OCI-LY7 (cell line): ENCODE measurements at regions of chr7 and their contacts with region 1.

Region 1: GRCh38 chr7:156865493-156865892 is 27.5 kb downstream of the LMBR1 start:
- DNase-seq: peak; percentile 7
- H3K4me3 ChIP-seq: no peak overlapping the region
- H3K27ac ChIP-seq: no peak overlapping the region
- H3K4me1 ChIP-seq: peaks cover 12% of the 10 kb centered on the region
- CTCF ChIP-seq: no peak

Region 2: GRCh38 chr7:156827587-156828203 is 37.8 kb before region 1 on chr7:
- CTCF ChIA-PET with region 1: no interaction called
- POLR2A ChIA-PET with region 1: no interaction called
- intact Hi-C with region 1: loop called (anchors 1 kb)
- DNase-seq: peak; percentile 30
- H3K4me3 ChIP-seq: no peak overlapping the region
- H3K27ac ChIP-seq: no peak overlapping the region
- H3K4me1 ChIP-seq: peaks cover 18% of the 10 kb centered on the region
- CTCF ChIP-seq: peak; percentile 76